B cell (primary cell): ENCODE measurements at regions of chr3 and their contacts with region 1.

Region 1: DNA sequence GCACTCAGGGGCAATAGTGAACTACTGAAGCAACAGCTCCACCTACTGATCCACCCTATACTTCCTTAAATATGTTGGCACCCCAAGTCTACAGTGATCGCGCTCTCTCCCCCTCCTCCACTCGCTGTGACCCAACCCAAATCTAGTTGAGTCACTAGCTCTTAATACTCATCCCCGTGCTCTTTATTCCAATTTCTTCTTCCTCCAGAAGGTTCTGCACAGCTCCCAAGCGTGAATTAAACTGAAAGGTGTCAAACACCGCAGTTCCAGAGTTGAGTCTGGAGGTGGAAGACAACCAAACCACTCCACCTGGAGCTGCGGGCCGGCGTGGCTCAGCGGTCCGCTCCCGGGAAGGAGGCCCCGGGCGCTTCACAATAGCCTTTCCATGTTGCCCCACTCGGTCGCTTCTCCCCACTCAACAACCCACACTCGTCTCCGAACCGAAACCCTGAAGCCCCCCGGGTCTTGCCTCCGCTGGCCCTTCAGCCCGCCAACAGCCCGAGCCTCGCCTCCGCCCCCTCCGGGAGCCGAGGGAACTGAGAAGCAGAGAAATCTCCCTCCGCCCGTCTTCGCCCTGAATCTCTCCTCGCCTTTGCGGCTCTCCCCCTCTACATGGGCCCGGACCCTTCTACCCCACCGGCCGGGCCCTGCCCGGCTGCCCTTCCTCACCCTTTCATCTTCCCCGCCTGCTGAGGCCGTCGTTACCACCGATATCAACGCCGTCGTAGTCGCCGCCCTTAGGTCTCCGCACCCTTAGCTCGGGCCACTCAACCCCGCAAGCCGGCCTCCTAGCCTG is 578 bp downstream of the NAA50 start:
- DNase-seq: peak; percentile 91
- ATAC-seq: peak; percentile 58
- H3K4me3 ChIP-seq: peak overlapping the region; percentile 75 to 94 (median 85)
- H3K4me3 Mint-ChIP-seq: peak overlapping the region; percentile 97
- H3K27ac ChIP-seq: peak overlapping the region; percentile 96 to 99
- H3K27ac Mint-ChIP-seq: peak overlapping the region; percentile 100
- H3K4me1 ChIP-seq: peaks cover 32 to 46% of the 10 kb centered on the region in 2 donors
- H3K4me1 Mint-ChIP-seq: peaks cover 67% of the 10 kb centered on the region
- H3K27me3 ChIP-seq: no peaks in the 10 kb centered on the region
- H3K27me3 Mint-ChIP-seq: no peaks in the 10 kb centered on the region
- CTCF ChIP-seq: peak; percentile 76

Region 2: GRCh38 chr3:112611752-112612515 is 1133.5 kb before region 1 on chr3:
- CTCF ChIA-PET with region 1: no interaction called
- POLR2A ChIA-PET with region 1: interaction called, 11 read pairs
- intact Hi-C with region 1: no loop called
- DNase-seq: no peak
- ATAC-seq: no peak
- H3K4me3 ChIP-seq: no peak overlapping the region
- H3K4me3 Mint-ChIP-seq: no peak overlapping the region
- H3K27ac ChIP-seq: no peak overlapping the region
- H3K27ac Mint-ChIP-seq: no peak overlapping the region
- H3K4me1 ChIP-seq: no peaks in the 10 kb centered on the region
- H3K4me1 Mint-ChIP-seq: no peaks in the 10 kb centered on the region
- H3K27me3 ChIP-seq: no peaks in the 10 kb centered on the region
- H3K27me3 Mint-ChIP-seq: peaks cover 4% of the 10 kb centered on the region
- CTCF ChIP-seq: no peak

Region 3: GRCh38 chr3:113514265-113514769 is 231.2 kb before region 1 on chr3:
- CTCF ChIA-PET with region 1: interaction called, 18 read pairs
- POLR2A ChIA-PET with region 1: interaction called, 12 read pairs
- intact Hi-C with region 1: loop called (anchors 1 kb)
- DNase-seq: no peak
- ATAC-seq: no peak
- H3K4me3 ChIP-seq: peak overlapping the region; percentile 46 to 98 (median 92)
- H3K4me3 Mint-ChIP-seq: no peak overlapping the region
- H3K27ac ChIP-seq: peak overlapping the region; percentile 77 to 91
- H3K27ac Mint-ChIP-seq: no peak overlapping the region
- H3K4me1 ChIP-seq: peaks cover 12 to 17% of the 10 kb centered on the region in 2 donors
- H3K4me1 Mint-ChIP-seq: peaks cover 14% of the 10 kb centered on the region
- H3K27me3 ChIP-seq: peaks cover 0 to 14% (median 4%) of the 10 kb centered on the region in 4 experiments
- H3K27me3 Mint-ChIP-seq: peaks cover 23% of the 10 kb centered on the region
- CTCF ChIP-seq: no peak

Region 4: GRCh38 chr3:113626503-113627371 is 118.7 kb before region 1 on chr3:
- CTCF ChIA-PET with region 1: interaction called, 20 read pairs
- POLR2A ChIA-PET with region 1: no interaction called
- intact Hi-C with region 1: loop called (anchors 1 kb)
- DNase-seq: peak; percentile 80
- ATAC-seq: peak; percentile 94
- H3K4me3 ChIP-seq: peak overlapping the region; percentile 34 to 68 (median 63)
- H3K4me3 Mint-ChIP-seq: peak overlapping the region; percentile 90
- H3K27ac ChIP-seq: peak overlapping the region; percentile 83 to 86
- H3K27ac Mint-ChIP-seq: peak overlapping the region; percentile 95
- H3K4me1 ChIP-seq: peaks cover 39 to 41% of the 10 kb centered on the region in 2 donors
- H3K4me1 Mint-ChIP-seq: peaks cover 58% of the 10 kb centered on the region
- H3K27me3 ChIP-seq: no peaks in the 10 kb centered on the region
- H3K27me3 Mint-ChIP-seq: no peaks in the 10 kb centered on the region
- CTCF ChIP-seq: peak; percentile 79

Region 5: DNA sequence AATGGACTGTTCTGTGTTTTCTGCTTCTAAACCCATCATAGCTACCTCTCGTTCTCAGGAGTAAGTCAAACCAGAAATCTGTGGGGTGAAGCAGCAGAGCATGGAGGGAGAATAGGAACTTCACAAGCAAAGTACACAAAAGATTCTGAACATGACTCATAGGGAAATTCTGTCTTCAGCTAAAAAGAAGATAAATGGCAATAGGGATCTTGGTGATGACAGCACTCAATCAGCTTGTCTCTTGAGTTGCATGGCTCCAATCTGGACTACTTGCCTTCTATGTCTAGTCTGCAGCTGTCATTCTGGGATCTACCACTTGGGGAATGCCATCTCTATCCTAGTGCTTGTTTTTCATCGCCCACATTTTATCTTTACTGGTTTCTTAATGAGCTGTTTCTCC is 79.6 kb after region 1 on chr3:
- CTCF ChIA-PET with region 1: interaction called, 19 read pairs
- POLR2A ChIA-PET with region 1: interaction called, 24 read pairs
- intact Hi-C with region 1: loop called (anchors 2 kb)
- DNase-seq: peak; percentile 46
- ATAC-seq: peak; percentile 77
- H3K4me3 ChIP-seq: no peak overlapping the region
- H3K4me3 Mint-ChIP-seq: peak overlapping the region; percentile 76
- H3K27ac ChIP-seq: peak overlapping the region; percentile 11
- H3K27ac Mint-ChIP-seq: peak overlapping the region; percentile 95
- H3K4me1 ChIP-seq: peaks cover 32 to 36% of the 10 kb centered on the region in 2 donors
- H3K4me1 Mint-ChIP-seq: peaks cover 40% of the 10 kb centered on the region
- H3K27me3 ChIP-seq: no peaks in the 10 kb centered on the region
- H3K27me3 Mint-ChIP-seq: no peaks in the 10 kb centered on the region
- CTCF ChIP-seq: no peak

Region 6: GRCh38 chr3:113912552-113913236 is 167.2 kb after region 1 on chr3:
- CTCF ChIA-PET with region 1: interaction called, 30 read pairs
- POLR2A ChIA-PET with region 1: interaction called, 3 read pairs
- intact Hi-C with region 1: loop called (anchors 2 kb)
- DNase-seq: peak; percentile 68
- ATAC-seq: peak; percentile 97
- H3K4me3 ChIP-seq: peak overlapping the region in 1 of 5 experiments; percentile 22
- H3K4me3 Mint-ChIP-seq: peak overlapping the region; percentile 53
- H3K27ac ChIP-seq: no peak overlapping the region
- H3K27ac Mint-ChIP-seq: peak overlapping the region; percentile 13
- H3K4me1 ChIP-seq: peaks cover 0 to 3% of the 10 kb centered on the region in 2 donors
- H3K4me1 Mint-ChIP-seq: peaks cover 4% of the 10 kb centered on the region
- H3K27me3 ChIP-seq: no peaks in the 10 kb centered on the region
- H3K27me3 Mint-ChIP-seq: no peaks in the 10 kb centered on the region
- CTCF ChIP-seq: peak; percentile 75

Region 7: GRCh38 chr3:114093596-114093995 is 348.1 kb after region 1 on chr3:
- CTCF ChIA-PET with region 1: no interaction called
- POLR2A ChIA-PET with region 1: no interaction called
- intact Hi-C with region 1: no loop called
- DNase-seq: no peak
- ATAC-seq: no peak
- H3K4me3 ChIP-seq: no peak overlapping the region
- H3K4me3 Mint-ChIP-seq: no peak overlapping the region
- H3K27ac ChIP-seq: no peak overlapping the region
- H3K27ac Mint-ChIP-seq: no peak overlapping the region
- H3K4me1 ChIP-seq: no peaks in the 10 kb centered on the region
- H3K4me1 Mint-ChIP-seq: no peaks in the 10 kb centered on the region
- H3K27me3 ChIP-seq: no peaks in the 10 kb centered on the region
- H3K27me3 Mint-ChIP-seq: peaks cover 3% of the 10 kb centered on the region
- CTCF ChIP-seq: no peak